Right ventricle myocardium inferior (tissue), 1 donor: ENCODE measurements at regions of chr1 and their contacts with region 1.

Region 1: DNA sequence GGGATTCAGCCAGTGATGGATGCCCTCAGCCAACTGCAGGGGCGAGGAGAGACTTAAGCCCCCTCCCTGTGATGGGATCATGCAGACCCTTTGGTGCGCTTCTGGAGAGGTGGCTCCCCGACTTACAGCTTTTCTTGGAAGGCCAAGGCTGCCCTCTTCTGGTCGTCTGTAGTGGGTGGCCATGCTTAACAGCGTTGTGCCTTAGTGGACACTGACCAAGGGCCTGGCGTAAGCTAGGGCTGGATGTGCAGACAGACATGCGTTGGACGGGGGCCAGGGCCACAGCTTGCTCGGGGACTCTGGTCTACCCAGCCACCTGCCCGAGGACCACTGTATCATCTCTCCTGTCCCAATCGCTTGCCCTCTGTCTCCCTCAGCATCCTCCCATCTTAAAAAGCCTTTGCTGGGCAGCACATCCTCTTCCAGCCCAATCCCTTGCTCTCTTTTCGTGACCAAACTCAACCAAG is 5.5 kb downstream of the AZIN2 start:
- DNase-seq: peak; percentile 73
- ATAC-seq: peak; percentile 81

Region 2: DNA sequence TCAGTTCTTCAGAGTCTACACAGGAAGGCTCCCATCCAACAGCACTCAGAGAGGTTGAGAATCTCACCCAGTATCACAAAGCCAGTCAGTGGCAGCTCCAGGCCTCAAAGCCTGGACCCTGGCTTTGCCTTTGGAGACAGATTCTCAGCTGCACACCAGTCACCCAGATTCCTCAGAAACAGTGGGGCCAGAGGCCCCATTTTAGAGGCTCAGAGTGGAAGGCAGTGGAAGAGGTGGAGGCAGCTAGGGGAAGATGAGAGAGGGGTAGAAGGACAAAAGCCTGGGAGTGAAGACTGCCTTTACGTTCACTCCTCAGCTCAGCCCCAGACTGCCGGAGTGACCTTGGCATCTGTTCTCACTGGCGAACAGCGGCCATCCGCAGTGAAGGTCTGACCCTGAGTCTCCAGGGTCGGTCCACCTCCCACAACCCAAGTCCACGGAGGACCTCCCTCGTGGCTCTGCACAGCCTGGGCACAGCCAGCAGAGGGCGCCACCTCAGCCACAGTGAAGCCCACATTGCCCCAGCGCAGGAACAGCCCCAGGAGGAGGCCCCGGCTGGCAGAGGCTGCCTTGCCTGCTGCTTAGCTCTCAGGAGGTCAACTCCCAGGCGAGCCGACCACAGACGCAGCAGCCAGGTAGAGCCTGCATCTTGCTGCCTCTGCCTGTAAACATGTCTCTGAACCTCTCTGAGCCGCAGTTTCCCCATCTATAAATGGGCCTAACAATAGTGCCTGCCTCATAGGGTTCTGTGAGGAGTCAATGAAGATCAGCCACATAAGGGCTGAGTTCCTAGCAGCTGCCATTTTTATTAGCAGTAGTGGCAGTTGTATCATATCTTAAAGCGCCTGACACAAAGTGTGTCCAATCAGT is 209.8 kb before region 1 on chr1:
- intact Hi-C with region 1: loop called (anchors 1 kb)
- DNase-seq: peak; percentile 84
- ATAC-seq: peak; percentile 55

Region 3: GRCh38 chr1:32933742-32934322 is 152.6 kb before region 1 on chr1:
- intact Hi-C with region 1: loop called (anchors 2 kb)
- DNase-seq: no peak
- ATAC-seq: peak; percentile 13

Region 4: DNA sequence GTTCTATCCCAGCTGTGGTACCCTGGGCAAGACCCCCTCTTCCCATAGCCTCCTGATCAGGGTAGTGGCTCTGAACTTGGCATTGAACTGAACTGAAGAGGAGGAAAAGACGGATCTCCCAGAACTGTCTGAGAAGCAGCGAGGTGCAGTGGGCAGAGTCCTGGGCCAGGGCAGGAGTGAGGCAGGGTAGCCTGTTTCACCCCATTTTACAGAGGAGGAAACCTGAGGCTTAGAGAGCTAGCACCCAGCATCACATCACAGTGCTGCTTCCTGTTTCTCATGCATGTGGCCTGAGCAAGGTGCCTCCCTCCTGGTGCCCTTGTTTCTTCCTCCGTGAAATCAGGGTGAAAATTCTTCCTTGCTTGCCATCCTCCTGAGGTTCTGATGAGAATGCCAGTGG is 187.0 kb after region 1 on chr1:
- intact Hi-C with region 1: no loop called
- DNase-seq: no peak
- ATAC-seq: no peak